Transverse colon (tissue), 4 donors: ENCODE measurements at regions of chr10 and their contacts with region 1.

Region 1: GRCh38 chr10:93115661-93116383 is 42.1 kb downstream of the CYP26A1 start:
- DNase-seq: peak; percentile 75
- H3K4me3 ChIP-seq: no peak overlapping the region
- H3K27ac ChIP-seq: no peak overlapping the region
- H3K4me1 ChIP-seq: no peaks in the 10 kb centered on the region
- H3K27me3 ChIP-seq: no peaks in the 10 kb centered on the region
- CTCF ChIP-seq: peak; percentile 34 to 52 (median 48)
- EP300 ChIP-seq: no peak
- POLR2A ChIP-seq: no peak

Region 2: GRCh38 chr10:93288654-93289634 is 173.1 kb after region 1 on chr10:
- in situ Hi-C with region 1: loop called in 3 of 4 experiments (anchors 5 to 25 kb)
- intact Hi-C with region 1: no loop called
- DNase-seq: peak; percentile 67
- H3K4me3 ChIP-seq: no peak overlapping the region
- H3K27ac ChIP-seq: no peak overlapping the region
- H3K4me1 ChIP-seq: no peaks in the 10 kb centered on the region
- H3K27me3 ChIP-seq: no peaks in the 10 kb centered on the region
- CTCF ChIP-seq: peak; percentile 70 to 86 (median 81)
- EP300 ChIP-seq: no peak
- POLR2A ChIP-seq: no peak

Region 3: DNA sequence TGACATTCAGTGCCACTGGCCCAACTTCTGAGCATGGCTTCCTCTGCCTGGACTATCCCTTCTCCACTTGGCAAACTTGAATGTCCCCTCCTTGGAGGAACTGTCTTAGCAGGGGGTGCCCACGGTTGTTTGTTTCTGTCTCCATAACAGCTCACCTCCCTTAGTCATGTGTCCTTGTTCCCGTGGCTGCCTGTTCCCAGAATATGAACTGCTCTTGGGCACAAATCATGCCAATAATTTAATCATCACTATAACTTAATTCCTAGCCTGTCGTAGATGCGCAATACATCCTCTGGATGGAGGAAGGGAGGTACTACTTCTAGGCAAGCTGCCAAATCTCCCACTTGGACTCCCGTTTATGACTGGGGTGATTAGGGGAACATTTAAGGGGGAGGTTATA is 193.2 kb after region 1 on chr10:
- in situ Hi-C with region 1: no loop called
- intact Hi-C with region 1: no loop called
- DNase-seq: no peak
- H3K4me3 ChIP-seq: no peak overlapping the region
- H3K27ac ChIP-seq: no peak overlapping the region
- H3K4me1 ChIP-seq: no peaks in the 10 kb centered on the region
- H3K27me3 ChIP-seq: no peaks in the 10 kb centered on the region
- CTCF ChIP-seq: no peak
- EP300 ChIP-seq: no peak
- POLR2A ChIP-seq: no peak